Uterus (tissue), 4 donors: ENCODE measurements at regions of chr22 and their contacts with region 1.

Region 1: GRCh38 chr22:35582861-35583670 is 34.1 kb downstream of the MB start:
- DNase-seq: peak; percentile 64 to 68
- H3K4me3 ChIP-seq: no peak overlapping the region
- H3K27ac ChIP-seq: peak overlapping the region; percentile 1 to 59
- H3K4me1 ChIP-seq: no peaks in the 10 kb centered on the region
- H3K27me3 ChIP-seq: no peaks in the 10 kb centered on the region
- CTCF ChIP-seq: peak; percentile 93 to 96 (median 94)
- POLR2A ChIP-seq: no peak

Region 2: GRCh38 chr22:35350539-35351503 is 232.2 kb before region 1 on chr22:
- intact Hi-C with region 1: loop called (anchors 2 kb)
- DNase-seq: peak; percentile 93 to 94
- H3K4me3 ChIP-seq: peak overlapping the region; percentile 35 to 41
- H3K27ac ChIP-seq: peak overlapping the region; percentile 81 to 87
- H3K4me1 ChIP-seq: peaks cover 0 to 10% of the 10 kb centered on the region in 2 donors
- H3K27me3 ChIP-seq: no peaks in the 10 kb centered on the region
- CTCF ChIP-seq: peak; percentile 92 to 98 (median 96)
- POLR2A ChIP-seq: peak in 1 of 2 donors; percentile 39

Region 3: DNA sequence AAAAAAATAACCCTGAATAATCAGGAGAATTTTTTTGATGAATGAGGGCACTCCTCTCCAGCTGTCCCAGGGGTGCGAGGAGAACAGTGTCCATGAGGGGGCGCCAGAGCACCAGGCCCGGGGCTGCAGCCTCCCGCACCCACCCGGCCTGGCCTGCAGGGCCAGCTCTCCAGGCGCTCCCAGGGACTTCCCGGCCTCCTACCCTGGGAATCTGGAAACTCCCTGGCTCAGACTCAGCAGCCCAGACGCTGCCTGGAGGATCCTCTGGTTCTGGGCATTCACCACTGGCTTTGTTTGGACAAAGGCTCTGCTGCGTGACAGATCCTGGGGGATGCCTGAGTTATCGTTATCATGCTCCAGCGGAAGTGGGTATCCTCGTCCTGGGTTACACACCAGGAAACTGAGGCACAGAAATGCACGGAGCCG is 152.2 kb before region 1 on chr22:
- intact Hi-C with region 1: loop called (anchors 5 kb)
- DNase-seq: peak; percentile 90 to 93
- H3K4me3 ChIP-seq: no peak overlapping the region
- H3K27ac ChIP-seq: peak overlapping the region; percentile 56 to 68
- H3K4me1 ChIP-seq: peaks cover 0 to 3% of the 10 kb centered on the region in 2 donors
- H3K27me3 ChIP-seq: no peaks in the 10 kb centered on the region
- CTCF ChIP-seq: peak; percentile 97 to 100 (median 99)
- POLR2A ChIP-seq: peak in 1 of 2 donors; percentile 34